MCF 10A (cell line): ENCODE measurements at regions of chr5 and their contacts with region 1.

Region 1: DNA sequence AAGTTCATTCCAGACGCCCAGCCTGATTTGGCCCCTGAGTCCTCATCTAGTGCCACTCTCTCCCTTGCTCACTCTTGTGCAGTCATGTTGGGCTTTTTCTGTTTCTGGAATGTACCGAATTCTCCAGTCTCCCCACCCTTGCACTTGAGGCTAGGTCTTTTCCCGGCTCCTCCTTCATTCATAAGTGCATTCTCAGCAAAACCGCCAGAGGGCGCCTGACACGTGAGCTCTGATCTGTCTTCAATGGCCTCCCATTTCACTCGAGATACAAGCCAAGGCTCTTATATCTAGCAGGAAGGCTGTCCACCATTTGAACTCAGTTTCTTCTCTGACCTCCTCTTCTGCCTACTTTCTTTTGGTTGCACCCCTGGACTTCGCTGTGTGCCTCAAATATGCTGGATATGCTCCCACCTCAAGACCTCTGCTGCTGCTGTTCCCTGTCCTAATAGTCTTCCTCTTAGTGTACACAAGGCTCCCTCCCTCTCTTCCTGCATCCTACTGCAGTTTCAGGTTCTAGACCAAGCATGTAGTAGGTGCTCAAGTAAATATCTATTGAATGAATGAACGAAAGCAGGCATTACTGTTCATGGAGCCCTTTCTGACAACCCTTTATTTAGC is 568.1 kb upstream of the WWC1 start:
- DNase-seq: peak; percentile 94
- H3K4me3 Mint-ChIP-seq: no peak overlapping the region
- H3K27ac Mint-ChIP-seq: peak overlapping the region; percentile 1
- H3K4me1 Mint-ChIP-seq: peaks cover 9% of the 10 kb centered on the region
- H3K27me3 Mint-ChIP-seq: no peaks in the 10 kb centered on the region
- CTCF ChIP-seq: peak; percentile 93

Region 2: DNA sequence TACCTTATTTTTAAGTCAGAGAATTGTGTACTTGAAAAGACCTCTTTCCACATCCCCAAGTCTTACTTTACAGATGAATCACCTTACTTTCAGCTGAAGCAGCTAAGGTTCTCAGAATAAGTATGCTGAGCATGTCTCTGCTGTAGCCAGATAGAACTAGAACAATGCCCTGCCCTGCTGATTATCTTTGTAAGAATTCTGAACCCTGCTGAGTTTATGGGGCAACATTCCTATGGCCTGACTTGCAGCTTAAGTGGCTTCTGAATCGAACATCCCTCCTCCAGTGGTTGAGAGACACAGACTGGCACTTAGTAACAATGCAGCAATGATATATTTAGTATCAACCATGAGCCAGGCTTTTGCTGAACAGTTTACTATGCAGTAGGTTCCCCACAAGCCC is 23.9 kb before region 1 on chr5:
- CTCF ChIA-PET with region 1: interaction called, 9 read pairs
- POLR2A ChIA-PET with region 1: interaction called, 14 read pairs
- intact Hi-C with region 1: loop called (anchors 2 kb)
- DNase-seq: peak; percentile 98
- H3K4me3 Mint-ChIP-seq: peak overlapping the region; percentile 42
- H3K27ac Mint-ChIP-seq: peak overlapping the region; percentile 98
- H3K4me1 Mint-ChIP-seq: peaks cover 36% of the 10 kb centered on the region
- H3K27me3 Mint-ChIP-seq: no peaks in the 10 kb centered on the region
- CTCF ChIP-seq: no peak

Region 3: DNA sequence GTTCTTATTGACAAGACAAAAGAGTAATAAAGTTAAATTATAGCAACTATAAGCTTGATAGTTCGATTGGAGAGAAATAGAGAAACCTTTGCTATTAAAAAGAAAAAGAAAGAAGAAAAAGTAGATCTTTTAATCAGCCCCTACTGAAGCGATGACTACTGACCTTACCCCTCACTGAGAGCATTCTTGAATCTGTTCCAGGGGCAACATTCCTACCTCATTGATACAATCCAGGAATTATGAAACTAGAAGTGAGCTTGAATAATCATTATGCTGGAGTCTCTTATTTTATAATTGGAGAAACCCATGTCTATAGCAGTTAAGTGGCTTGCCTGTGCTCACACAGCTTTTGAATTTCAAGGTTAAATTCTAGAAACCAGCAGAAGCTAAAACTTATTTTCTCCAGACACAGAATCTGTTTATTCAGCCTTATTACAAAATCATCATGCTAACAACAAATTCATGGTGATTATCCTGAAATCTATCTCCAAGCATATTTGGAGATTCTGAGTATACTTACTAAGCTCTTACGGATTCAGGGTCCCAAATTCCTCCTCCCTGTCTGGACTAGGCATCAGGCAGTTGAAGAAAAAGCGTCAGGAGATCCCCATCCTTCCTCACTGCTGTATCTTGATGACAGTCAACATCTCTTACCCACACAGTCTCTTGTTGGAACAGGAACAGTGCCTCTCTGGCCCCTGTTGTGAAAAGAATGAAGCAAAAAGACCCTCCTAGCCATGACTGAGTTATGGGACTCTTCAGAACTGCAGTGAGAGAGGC is 20.5 kb after region 1 on chr5:
- CTCF ChIA-PET with region 1: interaction called, 11 read pairs
- POLR2A ChIA-PET with region 1: interaction called, 4 read pairs
- intact Hi-C with region 1: no loop called
- DNase-seq: peak; percentile 90
- H3K4me3 Mint-ChIP-seq: no peak overlapping the region
- H3K27ac Mint-ChIP-seq: peak overlapping the region; percentile 5
- H3K4me1 Mint-ChIP-seq: peaks cover 18% of the 10 kb centered on the region
- H3K27me3 Mint-ChIP-seq: no peaks in the 10 kb centered on the region
- CTCF ChIP-seq: no peak

Region 4: DNA sequence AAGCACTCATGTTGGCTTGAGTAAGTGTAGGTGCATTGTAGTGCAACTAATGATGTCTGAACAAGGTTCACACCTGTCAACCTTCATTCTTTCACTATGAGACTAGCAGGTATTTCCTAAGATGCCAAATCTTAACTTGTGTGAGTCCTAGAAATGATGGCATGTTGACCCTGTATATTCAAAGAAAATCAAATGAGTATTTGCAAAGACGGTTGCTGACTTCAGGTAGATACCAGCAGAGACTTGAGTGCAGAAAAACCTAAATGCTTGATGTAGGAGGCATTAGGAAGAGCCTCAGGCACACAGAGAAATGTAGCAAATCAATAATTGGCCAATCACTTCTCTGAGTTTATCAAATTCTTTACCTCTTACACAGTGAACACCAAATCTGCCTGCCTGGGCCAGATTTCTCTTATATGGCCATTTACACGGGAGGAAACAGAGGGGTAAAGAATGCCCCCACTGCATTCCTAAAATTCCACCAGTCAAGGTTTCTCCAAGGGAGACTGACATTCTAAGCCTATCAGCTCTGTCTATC is 79.5 kb after region 1 on chr5:
- CTCF ChIA-PET with region 1: interaction called, 12 read pairs
- POLR2A ChIA-PET with region 1: no interaction called
- intact Hi-C with region 1: no loop called
- DNase-seq: no peak
- H3K4me3 Mint-ChIP-seq: no peak overlapping the region
- H3K27ac Mint-ChIP-seq: no peak overlapping the region
- H3K4me1 Mint-ChIP-seq: peaks cover 12% of the 10 kb centered on the region
- H3K27me3 Mint-ChIP-seq: no peaks in the 10 kb centered on the region
- CTCF ChIP-seq: no peak

Region 5: DNA sequence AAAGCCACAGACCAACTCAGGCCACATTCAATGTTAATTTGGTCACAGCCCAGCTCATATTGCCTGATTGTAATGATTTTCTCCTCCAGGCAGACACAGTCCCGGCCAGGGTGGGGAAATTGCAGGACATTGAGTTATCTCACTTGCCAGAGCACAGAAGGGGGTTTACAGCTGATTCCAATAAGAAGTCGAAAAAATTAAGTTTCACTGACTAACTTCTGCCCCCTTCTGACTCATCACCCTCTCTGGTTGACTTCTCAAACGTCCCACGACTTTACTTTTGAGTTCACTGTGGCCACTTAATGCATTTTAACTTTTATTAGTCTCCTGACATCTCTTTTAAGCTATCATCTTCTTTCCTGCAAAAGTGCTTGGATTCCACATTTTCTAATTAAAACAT is 246.6 kb after region 1 on chr5:
- CTCF ChIA-PET with region 1: interaction called, 7 read pairs
- POLR2A ChIA-PET with region 1: no interaction called
- intact Hi-C with region 1: loop called (anchors 1 kb)
- DNase-seq: peak; percentile 31
- H3K4me3 Mint-ChIP-seq: no peak overlapping the region
- H3K27ac Mint-ChIP-seq: no peak overlapping the region
- H3K4me1 Mint-ChIP-seq: no peaks in the 10 kb centered on the region
- H3K27me3 Mint-ChIP-seq: no peaks in the 10 kb centered on the region
- CTCF ChIP-seq: peak; percentile 6